ENCODE measurements at regions of chr4 and their contacts with region 1.

Region 1: GRCh38 chr4:145481164-145481941 is at the start of gene SMAD1:
- DNase-seq: peak; percentile 53
- ATAC-seq: peak; percentile 93
- H3K4me3 ChIP-seq: peak within 1 kb of the TSS; percentile 81 to 83 (median 82)
- H3K27ac ChIP-seq: peak within 1 kb of the TSS; percentile 89
- H3K4me1 ChIP-seq: peaks cover 36% of the 10 kb centered on the region
- H3K27me3 ChIP-seq: no peaks in the 10 kb centered on the region; a peak in 1 of 5 replicates
- CTCF ChIP-seq: no peak
- EP300 ChIP-seq: no peak
- POLR2A ChIP-seq: peak; percentile 57 to 58; a peak in 3 of 4 replicates
- RAD21 ChIP-seq: no peak; the same call in 1 of the 2 replicates
- total RNA-seq, gene SMAD1: 12.7 and 14.0 TPM in 2 replicates

Region 2: DNA sequence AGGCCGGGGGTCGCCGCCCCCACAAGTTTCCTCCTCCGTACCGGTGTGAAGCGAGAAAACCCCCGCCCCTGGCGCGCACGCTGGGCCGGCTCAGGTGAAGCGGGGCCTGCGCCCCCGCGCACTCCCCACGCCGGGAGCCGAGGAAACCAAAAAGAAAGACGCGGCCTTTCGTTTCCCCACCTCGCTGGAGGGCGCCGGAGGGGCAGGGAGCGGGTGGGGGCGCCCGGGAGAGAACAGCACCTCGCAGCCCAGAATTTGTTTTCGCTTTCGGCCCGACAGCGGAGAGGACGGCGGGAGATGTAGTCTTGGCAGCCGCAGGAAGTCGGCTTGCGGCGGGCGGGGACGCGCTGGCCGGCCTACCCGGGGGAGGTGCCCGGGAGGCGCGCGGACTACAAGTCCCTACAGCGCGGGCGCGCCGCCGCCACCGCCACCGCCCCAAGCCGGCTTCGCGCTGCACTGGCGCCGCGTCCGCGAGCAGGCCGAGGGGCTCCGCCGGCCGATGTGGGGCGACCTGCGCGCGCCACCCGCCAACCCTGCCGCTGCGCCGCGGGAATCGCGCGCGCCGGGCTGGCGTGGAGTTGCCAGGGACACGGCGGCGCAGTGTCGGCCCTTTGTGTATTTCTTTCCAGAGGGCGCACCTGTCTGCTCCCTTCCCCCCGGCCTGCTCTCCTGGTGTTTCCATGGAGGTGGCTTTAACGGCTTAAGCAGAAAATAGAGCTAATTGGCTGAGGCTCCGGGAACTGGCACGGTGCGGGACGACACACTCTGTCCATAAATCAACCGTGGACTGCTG is 300.9 kb before region 1 on chr4 and contains the start of gene OTUD4:
- CTCF ChIA-PET with region 1: no interaction called
- POLR2A ChIA-PET with region 1: no interaction called
- in situ Hi-C with region 1: no loop called
- intact Hi-C with region 1: loop called (anchors 5 kb)
- DNase-seq: peak; percentile 87
- ATAC-seq: peak; percentile 92
- H3K4me3 ChIP-seq: peak within 1 kb of the TSS; percentile 76 to 84 (median 81)
- H3K27ac ChIP-seq: peak within 1 kb of the TSS; percentile 92
- H3K4me1 ChIP-seq: peaks cover 26% of the 10 kb centered on the region
- H3K27me3 ChIP-seq: peaks cover 0 to 4% of the 10 kb centered on the region in 2 experiments; a peak in 2 of 5 replicates
- CTCF ChIP-seq: peak; percentile 58
- EP300 ChIP-seq: no peak
- POLR2A ChIP-seq: peak; percentile 15 to 50; a peak in 1 of 4 replicates
- RAD21 ChIP-seq: no peak; the same call in 1 of the 2 replicates
- total RNA-seq, gene OTUD4: 16.1 and 21.1 TPM in 2 replicates

Region 3: GRCh38 chr4:145498430-145498829 is 17.1 kb after region 1 on chr4:
- CTCF ChIA-PET with region 1: no interaction called
- POLR2A ChIA-PET with region 1: interaction called, 3 read pairs
- in situ Hi-C with region 1: no loop called
- intact Hi-C with region 1: loop called (anchors 2 kb)
- DNase-seq: no peak
- ATAC-seq: no peak
- H3K4me3 ChIP-seq: no peak overlapping the region
- H3K27ac ChIP-seq: no peak overlapping the region
- H3K4me1 ChIP-seq: peaks cover 2% of the 10 kb centered on the region; the same call in 1 of the 2 replicates
- H3K27me3 ChIP-seq: no peaks in the 10 kb centered on the region
- CTCF ChIP-seq: no peak
- EP300 ChIP-seq: no peak
- POLR2A ChIP-seq: no peak
- RAD21 ChIP-seq: no peak

Region 4: DNA sequence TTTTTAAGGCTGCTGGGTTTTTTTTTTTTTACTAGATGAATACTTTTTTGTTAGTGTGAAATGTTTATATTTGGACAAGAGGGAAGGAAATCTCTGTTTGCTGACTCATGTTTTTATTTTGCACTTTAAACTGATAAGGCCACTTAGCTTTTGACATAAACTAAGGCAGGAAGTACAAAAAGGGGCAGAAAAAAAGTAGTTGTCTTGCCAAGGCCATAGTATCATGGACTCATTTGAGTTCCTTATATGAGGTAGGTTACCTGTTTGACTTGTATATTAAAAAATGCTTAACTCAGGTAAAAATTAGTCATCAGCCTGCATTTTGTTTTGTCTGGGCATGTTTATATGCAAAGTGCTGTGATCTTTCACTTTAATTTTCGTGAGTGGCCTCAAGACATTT is 26.3 kb after region 1 on chr4:
- CTCF ChIA-PET with region 1: no interaction called
- POLR2A ChIA-PET with region 1: no interaction called
- in situ Hi-C with region 1: no loop called
- intact Hi-C with region 1: loop called (anchors 2 kb)
- DNase-seq: peak; percentile 21
- ATAC-seq: no peak
- H3K4me3 ChIP-seq: no peak overlapping the region; a peak in 1 of 6 replicates
- H3K27ac ChIP-seq: peak overlapping the region; percentile 9
- H3K4me1 ChIP-seq: peaks cover 61% of the 10 kb centered on the region
- H3K27me3 ChIP-seq: no peaks in the 10 kb centered on the region
- CTCF ChIP-seq: no peak
- EP300 ChIP-seq: peak in 1 of 2 experiments; percentile 30; a peak in 1 of 4 replicates
- POLR2A ChIP-seq: no peak
- RAD21 ChIP-seq: no peak